Activated CD4-positive, alpha-beta T cell treated with anti-CD3 and anti-CD28 coated beads, Interleukin-2, amount 10 ng/mL, durations not matched to agents 24 days and 14 days (primary cell): ENCODE measurements at regions of chr13 and their contacts with region 1.

Region 1: DNA sequence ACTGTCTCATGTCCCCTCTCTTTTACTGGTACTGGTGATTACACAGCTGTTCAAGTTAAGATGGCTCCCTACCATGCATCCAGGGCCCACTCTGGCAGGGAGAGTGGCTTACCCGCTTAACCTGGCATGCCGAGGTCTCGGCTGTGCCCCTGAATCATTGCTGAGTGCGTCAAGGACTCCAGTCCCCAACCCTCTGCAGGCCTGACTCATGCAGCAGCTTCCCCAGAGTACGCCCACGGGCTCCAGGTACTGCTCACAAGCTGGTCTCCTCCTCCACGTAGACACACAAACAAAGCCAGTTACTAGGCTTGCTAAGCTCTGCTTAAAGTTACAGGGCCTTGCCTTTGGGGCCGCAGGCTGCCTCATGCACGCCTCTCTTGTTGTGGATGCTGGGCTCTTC is 447.4 kb downstream of the COG6 start:
- DNase-seq: peak; percentile 84
- H3K4me3 Mint-ChIP-seq: peak overlapping the region; percentile 75
- H3K27ac Mint-ChIP-seq: peak overlapping the region; percentile 93
- H3K4me1 Mint-ChIP-seq: peaks cover 50% of the 10 kb centered on the region
- H3K27me3 Mint-ChIP-seq: no peaks in the 10 kb centered on the region

Region 2: GRCh38 chr13:40026174-40026585 is 76.7 kb before region 1 on chr13:
- intact Hi-C with region 1: loop called (anchors 1 kb)
- DNase-seq: peak; percentile 91
- H3K4me3 Mint-ChIP-seq: peak overlapping the region; percentile 57
- H3K27ac Mint-ChIP-seq: peak overlapping the region; percentile 62
- H3K4me1 Mint-ChIP-seq: peaks cover 35% of the 10 kb centered on the region
- H3K27me3 Mint-ChIP-seq: peaks cover 10% of the 10 kb centered on the region

Region 3: GRCh38 chr13:40132249-40132648 is 29.4 kb after region 1 on chr13:
- intact Hi-C with region 1: loop called (anchors 1 kb)
- DNase-seq: peak; percentile 85
- H3K4me3 Mint-ChIP-seq: no peak overlapping the region
- H3K27ac Mint-ChIP-seq: peak overlapping the region; percentile 78
- H3K4me1 Mint-ChIP-seq: peaks cover 43% of the 10 kb centered on the region
- H3K27me3 Mint-ChIP-seq: no peaks in the 10 kb centered on the region

Region 4: DNA sequence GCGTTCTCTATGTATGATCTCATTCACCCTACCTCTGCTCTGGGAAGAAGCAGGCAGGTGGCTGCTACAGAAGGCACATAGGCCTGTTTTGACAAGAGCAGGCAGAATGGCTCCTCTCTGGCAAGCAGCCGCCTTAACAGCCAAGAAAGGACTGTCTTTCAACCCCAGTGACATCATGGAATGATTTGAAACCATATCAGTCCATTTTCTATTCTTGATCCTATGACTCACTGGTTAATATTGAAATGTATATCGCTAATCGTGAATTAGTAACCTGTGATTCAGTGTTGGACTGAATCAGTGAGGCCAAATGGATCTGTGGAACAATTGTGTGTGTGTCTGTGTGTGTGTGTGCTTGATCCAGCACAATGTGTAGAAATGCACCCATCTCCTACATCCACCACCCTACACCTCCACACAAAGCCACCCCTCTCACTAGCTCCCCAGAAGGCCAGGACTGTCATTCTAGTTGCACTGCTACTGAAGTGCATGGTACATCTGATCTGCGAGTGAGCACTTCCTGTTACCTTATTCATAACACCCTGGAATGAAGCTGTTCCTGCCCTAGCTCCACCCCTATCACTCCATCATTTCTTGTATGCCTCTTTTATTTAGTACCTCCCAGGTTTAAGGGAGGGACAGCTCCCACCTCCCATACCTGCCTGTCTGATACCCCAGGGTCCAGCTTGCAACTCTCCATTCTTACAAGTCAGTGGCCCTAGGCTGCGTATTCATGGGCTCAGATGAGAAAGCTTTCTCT is 103.6 kb after region 1 on chr13:
- intact Hi-C with region 1: loop called (anchors 2 kb)
- DNase-seq: peak; percentile 80
- H3K4me3 Mint-ChIP-seq: peak overlapping the region; percentile 63
- H3K27ac Mint-ChIP-seq: peak overlapping the region; percentile 97
- H3K4me1 Mint-ChIP-seq: peaks cover 37% of the 10 kb centered on the region
- H3K27me3 Mint-ChIP-seq: no peaks in the 10 kb centered on the region

Region 5: GRCh38 chr13:40318366-40318765 is 215.5 kb after region 1 on chr13:
- intact Hi-C with region 1: loop called (anchors 5 kb)
- DNase-seq: no peak
- H3K4me3 Mint-ChIP-seq: no peak overlapping the region
- H3K27ac Mint-ChIP-seq: peak overlapping the region; percentile 47
- H3K4me1 Mint-ChIP-seq: peaks cover 58% of the 10 kb centered on the region
- H3K27me3 Mint-ChIP-seq: no peaks in the 10 kb centered on the region

Region 6: DNA sequence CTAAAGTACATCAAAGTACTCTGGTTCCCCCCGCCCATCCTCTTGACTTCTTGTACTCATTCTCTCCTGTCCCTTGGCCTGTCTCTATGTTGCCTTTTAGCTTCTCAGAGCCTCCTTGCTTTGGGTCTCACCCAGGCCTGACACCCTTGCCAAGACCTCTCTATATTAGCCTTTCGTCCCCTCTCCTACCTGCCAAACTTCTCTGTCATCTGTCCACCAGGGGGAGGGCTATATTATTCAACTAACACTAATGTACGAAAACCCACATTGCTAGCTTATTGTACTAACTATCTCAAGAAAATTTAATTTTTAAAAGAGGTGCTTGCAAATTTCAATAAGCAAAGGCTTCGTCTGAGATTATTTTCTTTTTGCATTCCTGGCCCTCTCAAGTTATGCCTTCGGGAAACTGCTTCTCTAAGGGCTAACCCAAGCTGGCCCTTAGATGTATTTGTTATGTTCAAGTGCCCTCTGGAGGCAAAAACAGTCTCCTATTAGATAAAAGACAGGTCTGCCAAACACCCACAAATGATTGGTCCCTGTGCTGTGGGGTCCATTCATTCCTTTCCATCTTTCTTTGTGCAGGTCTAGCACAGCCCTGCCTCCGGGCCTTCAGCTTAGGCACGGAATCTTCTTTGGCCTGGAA is 674.4 kb after region 1 on chr13:
- intact Hi-C with region 1: loop called (anchors 2 kb)
- DNase-seq: peak; percentile 84
- H3K4me3 Mint-ChIP-seq: peak overlapping the region; percentile 77
- H3K27ac Mint-ChIP-seq: peak overlapping the region; percentile 99
- H3K4me1 Mint-ChIP-seq: peaks cover 33% of the 10 kb centered on the region
- H3K27me3 Mint-ChIP-seq: no peaks in the 10 kb centered on the region